CD8-positive, alpha-beta T cell (primary cell): ENCODE measurements at regions of chr9 and their contacts with region 1.

Region 1: GRCh38 chr9:121992571-121993212 is 100.4 kb downstream of the TTLL11 start:
- DNase-seq: peak; percentile 2 to 73 (median 36)
- ATAC-seq: peak; percentile 49
- H3K4me3 ChIP-seq: no peak overlapping the region
- H3K4me3 Mint-ChIP-seq: no peak overlapping the region
- H3K27ac ChIP-seq: no peak overlapping the region
- H3K27ac Mint-ChIP-seq: no peak overlapping the region
- H3K4me1 ChIP-seq: no peaks in the 10 kb centered on the region
- H3K4me1 Mint-ChIP-seq: no peaks in the 10 kb centered on the region
- H3K27me3 ChIP-seq: no peaks in the 10 kb centered on the region
- H3K27me3 Mint-ChIP-seq: no peaks in the 10 kb centered on the region
- CTCF ChIP-seq: peak; percentile 78

Region 2: GRCh38 chr9:121353241-121354061 is 639.2 kb before region 1 on chr9:
- CTCF ChIA-PET with region 1: no interaction called
- POLR2A ChIA-PET with region 1: no interaction called
- intact Hi-C with region 1: no loop called
- DNase-seq: peak in 8 of 9 experiments; percentile 41 to 93 (median 65)
- ATAC-seq: peak; percentile 84
- H3K4me3 ChIP-seq: peak overlapping the region in 1 of 2 experiments; percentile 12
- H3K4me3 Mint-ChIP-seq: peak overlapping the region; percentile 47
- H3K27ac ChIP-seq: peak overlapping the region in 1 of 2 experiments; percentile 73
- H3K27ac Mint-ChIP-seq: peak overlapping the region; percentile 33
- H3K4me1 ChIP-seq: peaks cover 34% of the 10 kb centered on the region
- H3K4me1 Mint-ChIP-seq: peaks cover 56% of the 10 kb centered on the region
- H3K27me3 ChIP-seq: no peaks in the 10 kb centered on the region
- H3K27me3 Mint-ChIP-seq: no peaks in the 10 kb centered on the region
- CTCF ChIP-seq: no peak

Region 3: DNA sequence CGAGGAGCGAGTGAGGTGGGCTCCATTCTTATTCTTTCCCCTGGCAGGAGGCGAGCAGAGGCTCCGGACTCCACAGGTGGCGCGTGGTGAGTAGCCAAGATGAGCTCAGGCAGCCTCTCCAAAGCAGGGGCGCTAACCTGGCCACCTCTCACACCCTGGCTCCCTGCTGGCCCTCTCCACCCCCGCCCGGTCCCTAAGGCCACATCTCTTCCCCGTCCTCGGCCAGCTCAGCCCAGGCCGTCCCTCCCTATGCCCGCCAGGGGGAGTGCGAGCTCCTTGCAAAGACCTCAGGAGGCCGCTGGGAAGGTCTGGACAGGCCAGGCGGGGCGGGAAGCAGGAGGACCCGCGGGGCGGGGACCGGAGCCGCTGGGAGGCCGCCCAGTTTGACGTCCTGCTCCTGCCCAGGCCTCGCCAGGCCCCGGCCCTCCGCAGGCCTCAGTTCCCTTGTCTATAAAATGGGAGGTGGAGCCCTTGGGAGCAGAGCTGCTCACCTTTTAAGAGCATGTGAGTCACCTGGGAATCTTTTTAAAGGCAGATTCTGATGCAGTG is 446.7 kb before region 1 on chr9:
- CTCF ChIA-PET with region 1: interaction called, 5 read pairs
- POLR2A ChIA-PET with region 1: no interaction called
- intact Hi-C with region 1: loop called in 1 of 2 experiments (anchors 1 kb)
- DNase-seq: peak; percentile 28 to 72 (median 62)
- ATAC-seq: peak; percentile 59
- H3K4me3 ChIP-seq: no peak overlapping the region
- H3K4me3 Mint-ChIP-seq: no peak overlapping the region
- H3K27ac ChIP-seq: no peak overlapping the region
- H3K27ac Mint-ChIP-seq: no peak overlapping the region
- H3K4me1 ChIP-seq: peaks cover 14% of the 10 kb centered on the region
- H3K4me1 Mint-ChIP-seq: peaks cover 2% of the 10 kb centered on the region
- H3K27me3 ChIP-seq: peaks cover 4 to 7% of the 10 kb centered on the region in 2 experiments
- H3K27me3 Mint-ChIP-seq: peaks cover 33% of the 10 kb centered on the region
- CTCF ChIP-seq: peak; percentile 57

Region 4: DNA sequence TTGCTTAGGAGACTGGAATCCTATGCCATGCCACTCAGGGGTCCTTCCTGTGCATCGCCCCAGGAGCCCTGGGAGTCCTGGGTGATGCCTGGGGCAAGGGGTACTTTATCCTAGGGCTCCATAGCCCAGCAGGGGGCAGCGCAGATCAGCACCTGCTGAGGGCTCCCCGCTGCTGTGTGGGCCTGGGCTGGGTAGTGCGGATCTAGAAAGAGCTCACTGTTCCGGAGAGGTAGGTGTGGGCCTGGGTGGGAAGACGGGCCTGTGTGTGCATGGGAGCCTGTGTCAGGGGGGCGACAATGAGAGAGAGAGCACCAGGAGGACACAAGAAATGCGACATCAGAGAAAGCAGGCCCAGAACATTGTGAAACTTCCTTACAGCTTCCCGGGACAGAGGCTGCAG is 352.6 kb before region 1 on chr9:
- CTCF ChIA-PET with region 1: no interaction called
- POLR2A ChIA-PET with region 1: no interaction called
- intact Hi-C with region 1: loop called in 1 of 2 experiments (anchors 1 kb)
- DNase-seq: peak in 4 of 9 experiments; percentile 16 to 32 (median 26)
- ATAC-seq: no peak
- H3K4me3 ChIP-seq: no peak overlapping the region
- H3K4me3 Mint-ChIP-seq: no peak overlapping the region
- H3K27ac ChIP-seq: no peak overlapping the region
- H3K27ac Mint-ChIP-seq: no peak overlapping the region
- H3K4me1 ChIP-seq: no peaks in the 10 kb centered on the region
- H3K4me1 Mint-ChIP-seq: no peaks in the 10 kb centered on the region
- H3K27me3 ChIP-seq: peaks cover 0 to 4% of the 10 kb centered on the region in 2 experiments
- H3K27me3 Mint-ChIP-seq: no peaks in the 10 kb centered on the region
- CTCF ChIP-seq: peak; percentile 27

Region 5: DNA sequence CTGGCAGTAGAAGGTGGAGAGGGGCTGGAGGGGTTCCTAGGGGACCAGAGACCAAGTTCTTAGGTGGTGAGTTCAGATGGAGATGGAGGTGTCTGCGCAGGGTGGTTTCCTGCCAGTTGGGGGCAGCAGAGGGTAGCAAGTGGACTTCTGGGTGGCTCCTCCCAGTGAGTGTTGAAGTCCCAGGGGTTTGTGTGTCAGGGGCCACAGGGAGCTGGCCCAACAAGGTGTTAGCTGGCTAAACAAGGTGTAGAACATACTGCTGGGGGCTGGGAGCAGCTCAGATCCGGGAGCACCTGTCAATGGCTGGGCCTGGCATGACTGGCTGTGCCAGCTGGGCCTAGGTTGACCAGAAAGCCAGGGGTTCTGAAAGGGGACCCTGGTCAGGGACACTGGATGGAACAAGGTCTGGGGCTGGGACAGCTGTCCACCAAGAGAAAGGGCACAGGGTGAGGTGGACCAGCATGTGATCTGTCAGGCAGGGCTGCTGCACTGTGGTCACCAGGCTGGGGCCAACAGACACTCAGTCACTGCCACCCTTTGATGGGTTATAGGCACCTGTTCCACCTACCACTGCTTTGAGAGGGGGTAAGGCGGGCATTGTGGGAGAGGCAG is 305.7 kb before region 1 on chr9:
- CTCF ChIA-PET with region 1: interaction called, 9 read pairs
- POLR2A ChIA-PET with region 1: no interaction called
- intact Hi-C with region 1: loop called in 1 of 2 experiments (anchors 1 kb)
- DNase-seq: peak; percentile 17 to 72 (median 57)
- ATAC-seq: peak; percentile 59
- H3K4me3 ChIP-seq: no peak overlapping the region
- H3K4me3 Mint-ChIP-seq: no peak overlapping the region
- H3K27ac ChIP-seq: no peak overlapping the region
- H3K27ac Mint-ChIP-seq: no peak overlapping the region
- H3K4me1 ChIP-seq: no peaks in the 10 kb centered on the region
- H3K4me1 Mint-ChIP-seq: no peaks in the 10 kb centered on the region
- H3K27me3 ChIP-seq: no peaks in the 10 kb centered on the region
- H3K27me3 Mint-ChIP-seq: peaks cover 10% of the 10 kb centered on the region
- CTCF ChIP-seq: peak; percentile 65

Region 6: GRCh38 chr9:121744002-121744686 is 248.5 kb before region 1 on chr9:
- CTCF ChIA-PET with region 1: interaction called, 5 read pairs
- POLR2A ChIA-PET with region 1: no interaction called
- intact Hi-C with region 1: loop called (anchors 1 kb)
- DNase-seq: peak in 7 of 9 experiments; percentile 6 to 72 (median 60)
- ATAC-seq: peak; percentile 66
- H3K4me3 ChIP-seq: no peak overlapping the region
- H3K4me3 Mint-ChIP-seq: no peak overlapping the region
- H3K27ac ChIP-seq: no peak overlapping the region
- H3K27ac Mint-ChIP-seq: no peak overlapping the region
- H3K4me1 ChIP-seq: peaks cover 14% of the 10 kb centered on the region
- H3K4me1 Mint-ChIP-seq: peaks cover 18% of the 10 kb centered on the region
- H3K27me3 ChIP-seq: no peaks in the 10 kb centered on the region
- H3K27me3 Mint-ChIP-seq: no peaks in the 10 kb centered on the region
- CTCF ChIP-seq: peak; percentile 39

Region 7: DNA sequence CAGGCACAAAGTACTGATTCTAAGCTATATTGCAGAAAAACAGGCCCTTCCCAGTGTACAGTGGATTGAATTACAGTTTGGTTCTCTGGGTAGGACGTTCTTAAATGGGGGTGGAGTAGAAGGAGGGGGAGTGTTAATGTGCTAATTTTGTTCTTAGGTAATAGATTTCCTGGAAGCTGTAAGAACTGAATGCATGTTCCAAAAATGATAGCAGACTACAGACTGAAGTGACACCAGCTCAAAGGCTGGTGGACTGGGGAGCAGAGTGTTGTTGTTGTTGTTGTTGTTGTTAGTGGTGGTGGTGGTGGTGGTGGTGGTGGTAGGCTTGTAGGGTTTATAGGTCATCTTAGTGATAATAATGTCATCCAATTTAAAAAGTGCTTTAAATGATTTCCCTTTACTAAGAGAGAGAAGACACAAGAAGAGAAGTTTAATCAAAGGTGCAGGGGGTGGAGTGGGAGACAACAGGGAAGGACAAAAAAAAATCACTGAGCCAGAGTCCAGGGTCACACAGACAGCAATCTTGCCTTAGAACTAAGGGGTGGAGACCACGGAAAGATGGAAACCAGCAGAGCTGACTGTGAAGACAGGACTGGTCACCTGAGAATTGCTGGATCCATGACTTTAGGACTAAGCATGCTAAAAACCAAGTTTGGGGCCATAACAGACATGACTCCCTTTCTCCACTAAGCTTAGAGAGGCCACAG is 73.4 kb after region 1 on chr9:
- CTCF ChIA-PET with region 1: no interaction called
- POLR2A ChIA-PET with region 1: no interaction called
- intact Hi-C with region 1: no loop called
- DNase-seq: no peak
- ATAC-seq: no peak
- H3K4me3 ChIP-seq: no peak overlapping the region
- H3K4me3 Mint-ChIP-seq: no peak overlapping the region
- H3K27ac ChIP-seq: no peak overlapping the region
- H3K27ac Mint-ChIP-seq: no peak overlapping the region
- H3K4me1 ChIP-seq: no peaks in the 10 kb centered on the region
- H3K4me1 Mint-ChIP-seq: peaks cover 7% of the 10 kb centered on the region
- H3K27me3 ChIP-seq: no peaks in the 10 kb centered on the region
- H3K27me3 Mint-ChIP-seq: no peaks in the 10 kb centered on the region
- CTCF ChIP-seq: no peak